H1 (cell line): ENCODE measurements at regions of chr3 and their contacts with region 1.

Region 1: GRCh38 chr3:186108941-186109865 is at the start of gene ETV5:
- DNase-seq: peak; percentile 93 to 98
- H3K4me3 ChIP-seq: peak within 1 kb of the TSS; percentile 37 to 87 (median 74)
- H3K27ac ChIP-seq: no peak within 1 kb of the TSS
- H3K4me1 ChIP-seq: peaks cover 0 to 11% (median 7%) of the 10 kb centered on the region in 4 experiments; a peak in 6 of 7 replicates
- H3K27me3 ChIP-seq: peaks cover 34 to 68% (median 52%) of the 10 kb centered on the region in 4 experiments
- CTCF ChIP-seq: no peak
- EP300 ChIP-seq: no peak
- POLR2A ChIP-seq: peak; percentile 67 to 89
- RAD21 ChIP-seq: no peak; a peak in 1 of 4 replicates
- total RNA-seq, gene ETV5: 31.9 and 36.9 TPM in 2 replicates

Region 2: GRCh38 chr3:186079925-186080324 is 29.3 kb before region 1 on chr3:
- CTCF ChIA-PET with region 1: interaction called, 3 read pairs
- POLR2A ChIA-PET with region 1: interaction called, 10 read pairs
- DNase-seq: no peak
- H3K4me3 ChIP-seq: peak overlapping the region in 1 of 4 experiments; percentile 23; a peak in 1 of 8 replicates
- H3K27ac ChIP-seq: no peak overlapping the region
- H3K4me1 ChIP-seq: peaks cover 4 to 16% (median 16%) of the 10 kb centered on the region in 4 experiments; a peak in 6 of 7 replicates
- H3K27me3 ChIP-seq: no peaks in the 10 kb centered on the region
- CTCF ChIP-seq: no peak
- EP300 ChIP-seq: no peak
- POLR2A ChIP-seq: no peak
- RAD21 ChIP-seq: no peak

Region 3: GRCh38 chr3:186097663-186098451 is 11.3 kb before region 1 on chr3:
- CTCF ChIA-PET with region 1: interaction called, 4 read pairs
- POLR2A ChIA-PET with region 1: interaction called, 56 read pairs
- DNase-seq: peak in 1 of 2 experiments; percentile 84
- H3K4me3 ChIP-seq: peak overlapping the region; percentile 44 to 57 (median 47); a peak in 7 of 8 replicates
- H3K27ac ChIP-seq: no peak overlapping the region
- H3K4me1 ChIP-seq: peaks cover 5 to 26% (median 22%) of the 10 kb centered on the region in 4 experiments
- H3K27me3 ChIP-seq: peaks cover 0 to 15% (median 9%) of the 10 kb centered on the region in 4 experiments; a peak in 5 of 7 replicates
- CTCF ChIP-seq: no peak
- EP300 ChIP-seq: peak in 1 of 2 experiments; percentile 93; a peak in 2 of 3 replicates
- POLR2A ChIP-seq: peak; percentile 17 to 31; a peak in 2 of 3 replicates
- RAD21 ChIP-seq: 0 out of 4 replicates have a peak, but pooled peaks of 1 of the 2 experiments have one; percentile 1

Region 4: DNA sequence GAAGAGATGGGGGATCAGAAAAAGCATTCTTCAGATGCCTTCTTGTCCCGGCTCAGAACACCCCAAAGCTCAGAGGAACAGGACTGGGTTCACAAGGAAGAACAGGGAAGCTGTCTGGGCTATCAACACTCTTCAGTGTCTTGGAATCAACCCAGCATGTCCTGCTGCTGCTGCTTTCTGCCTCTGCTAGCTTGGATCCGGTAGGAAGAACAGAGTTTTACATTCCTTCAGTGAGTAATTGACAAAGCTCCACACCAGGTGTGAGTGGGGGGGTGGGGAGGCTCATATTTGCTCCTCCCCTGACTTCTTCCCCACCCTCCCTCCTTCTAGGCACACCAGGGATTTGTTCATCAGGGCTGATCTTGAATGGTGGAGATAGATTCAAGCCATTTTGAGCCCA is 12.8 kb after region 1 on chr3:
- CTCF ChIA-PET with region 1: interaction called, 4 read pairs
- POLR2A ChIA-PET with region 1: interaction called, 42 read pairs
- DNase-seq: peak in 1 of 2 experiments; percentile 59
- H3K4me3 ChIP-seq: 0 out of 8 replicates have a peak overlapping the region, but pooled peaks of 1 of the 4 experiments have one; percentile 1
- H3K27ac ChIP-seq: no peak overlapping the region
- H3K4me1 ChIP-seq: peaks cover 3 to 11% (median 8%) of the 10 kb centered on the region in 4 experiments; a peak in 4 of 7 replicates
- H3K27me3 ChIP-seq: peaks cover 0 to 2% (median 0%) of the 10 kb centered on the region in 4 experiments; a peak in 1 of 7 replicates
- CTCF ChIP-seq: no peak
- EP300 ChIP-seq: no peak
- POLR2A ChIP-seq: peak in 1 of 2 experiments; percentile 52; a peak in 1 of 3 replicates
- RAD21 ChIP-seq: no peak

Region 5: DNA sequence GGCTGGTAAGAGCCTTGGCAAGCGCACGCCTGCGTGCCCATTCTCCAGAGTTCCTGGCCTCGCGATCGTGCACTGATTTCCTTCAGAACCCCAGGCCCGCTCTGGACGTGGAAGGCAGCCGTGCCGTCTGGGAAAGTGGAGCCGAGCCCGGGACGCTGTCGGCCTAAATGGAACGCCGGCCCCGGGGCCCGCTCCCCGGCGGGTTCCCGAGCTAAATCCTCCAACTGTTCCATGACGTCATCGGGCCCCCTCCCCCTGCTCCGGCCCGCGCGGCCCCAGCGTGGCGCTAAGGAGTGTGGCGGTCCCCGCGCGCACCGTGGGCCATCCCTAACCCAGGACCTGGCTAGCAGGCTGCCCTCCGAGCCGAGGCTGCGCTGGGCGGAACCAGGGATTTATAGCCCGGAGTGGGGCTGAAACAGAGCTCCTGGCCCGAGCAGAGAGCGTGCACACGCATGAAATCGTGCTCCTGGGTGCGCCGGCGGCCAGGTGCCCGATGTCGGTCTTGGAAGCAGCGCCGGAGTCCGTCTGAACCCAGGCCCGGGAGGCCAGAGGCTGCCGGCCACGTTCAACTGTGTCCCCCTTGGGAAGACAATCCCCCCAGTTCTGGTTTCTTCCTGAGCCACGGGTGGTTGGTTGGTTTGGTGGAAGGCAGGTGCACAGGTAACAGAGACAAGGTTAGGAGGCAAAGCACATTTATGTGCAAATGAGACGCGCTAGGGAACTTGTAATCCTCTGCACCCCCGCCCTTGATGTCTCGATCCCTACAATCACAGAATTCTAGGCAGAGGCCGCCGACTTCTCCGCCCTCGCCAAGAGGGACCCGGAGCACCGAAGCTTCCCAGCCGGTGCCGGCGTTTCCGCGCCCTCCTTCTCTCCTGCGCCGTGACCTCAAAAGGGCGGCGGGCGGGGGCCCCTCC is 84.6 kb after region 1 on chr3:
- CTCF ChIA-PET with region 1: no interaction called
- POLR2A ChIA-PET with region 1: interaction called, 24 read pairs
- DNase-seq: peak; percentile 31 to 80
- H3K4me3 ChIP-seq: peak overlapping the region; percentile 19 to 70 (median 57)
- H3K27ac ChIP-seq: no peak overlapping the region
- H3K4me1 ChIP-seq: peaks cover 3 to 8% (median 4%) of the 10 kb centered on the region in 4 experiments; a peak in 6 of 7 replicates
- H3K27me3 ChIP-seq: peaks cover 36 to 75% (median 61%) of the 10 kb centered on the region in 4 experiments
- CTCF ChIP-seq: no peak
- EP300 ChIP-seq: no peak; a peak in 1 of 3 replicates
- POLR2A ChIP-seq: no peak
- RAD21 ChIP-seq: peak; percentile 3 to 7; a peak in 1 of 4 replicates